ENCODE measurements at regions of chr9 and their contacts with region 1.

Region 1: DNA sequence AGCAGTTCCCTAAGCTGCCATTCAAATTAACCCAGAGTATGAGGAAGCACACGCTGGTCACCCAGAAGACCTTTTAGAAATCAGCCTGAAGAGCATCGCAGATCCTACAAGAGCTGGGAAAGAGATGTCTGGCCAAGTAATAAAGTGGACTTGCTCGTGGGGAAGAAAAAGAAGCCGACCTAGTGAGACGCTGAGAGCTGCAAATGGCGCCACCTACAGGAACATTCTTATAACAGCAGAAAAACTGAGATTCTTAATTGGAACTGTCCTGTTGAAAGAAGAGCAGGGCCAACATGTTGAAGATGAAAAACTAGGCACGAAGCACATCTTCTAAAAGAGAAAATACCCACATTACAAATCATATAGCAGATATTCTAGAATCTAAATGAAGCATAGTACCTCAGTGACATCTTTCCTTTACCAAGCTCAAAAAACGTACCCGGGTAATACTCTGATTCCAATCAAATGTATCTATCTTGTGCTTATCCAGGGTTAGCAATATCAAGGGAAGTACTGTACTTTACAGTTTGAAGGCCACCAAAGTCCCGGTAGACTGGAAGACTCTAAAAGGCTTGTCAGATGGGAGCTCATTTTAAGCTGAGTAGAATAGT is 3.9 kb upstream of the GNAQ start:
- DNase-seq: no peak
- ATAC-seq: peak; percentile 54

Region 2: GRCh38 chr9:77435688-77436087 is 599.8 kb before region 1 on chr9:
- intact Hi-C with region 1: loop called (anchors 5 kb)
- DNase-seq: no peak
- ATAC-seq: no peak

Region 3: GRCh38 chr9:77731930-77732329 is 303.6 kb before region 1 on chr9:
- intact Hi-C with region 1: no loop called
- DNase-seq: no peak
- ATAC-seq: no peak

Region 4: DNA sequence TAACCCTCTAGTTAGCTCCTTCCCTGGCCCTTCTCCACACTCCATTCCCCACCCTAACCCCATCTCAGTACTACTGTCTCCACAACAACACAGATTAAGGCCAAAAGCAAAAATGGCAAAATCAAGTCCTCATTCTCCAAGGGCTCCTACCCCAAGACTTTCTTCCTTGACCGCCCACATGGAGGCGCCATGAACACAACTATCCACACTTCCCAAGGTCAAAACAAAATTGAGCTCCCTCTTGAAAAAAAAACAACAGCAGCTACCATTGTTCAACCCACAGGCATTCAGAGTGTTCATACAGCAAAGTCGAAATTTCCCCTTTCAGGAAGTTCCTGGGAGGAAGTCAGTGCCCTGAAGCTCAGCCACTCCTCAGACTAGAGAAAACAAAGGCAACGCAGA is 58.3 kb before region 1 on chr9:
- intact Hi-C with region 1: loop called (anchors 10 kb)
- DNase-seq: peak; percentile 77
- ATAC-seq: peak; percentile 90

Measured in sciatic nerve (tissue), 2 donors.